Mammary epithelial cell (primary cell): ENCODE measurements at regions of chr9 and their contacts with region 1.

Region 1: DNA sequence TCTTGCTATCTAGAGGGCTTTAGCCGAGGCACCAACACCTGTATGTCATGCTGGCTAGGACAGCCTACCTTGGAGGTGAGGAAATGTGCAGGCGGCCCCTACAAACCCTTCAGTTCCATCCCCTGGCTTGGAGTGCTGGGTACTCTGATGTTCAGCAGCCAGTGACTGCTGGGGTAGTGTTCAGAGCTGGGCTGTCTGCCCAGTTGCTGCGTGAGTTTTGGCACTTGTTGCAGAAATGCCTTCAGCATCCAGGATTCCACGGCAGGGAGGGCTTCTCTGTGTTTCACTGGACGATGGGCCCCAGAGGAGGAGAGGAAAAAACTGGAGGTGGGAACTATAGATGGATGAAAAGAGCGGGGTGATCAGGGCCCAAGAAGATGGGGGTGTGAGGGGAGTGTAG is 10.4 kb downstream of the SWI5 start:
- DNase-seq: no peak
- H3K4me3 ChIP-seq: no peak overlapping the region
- H3K27ac ChIP-seq: no peak overlapping the region
- H3K4me1 ChIP-seq: no peaks in the 10 kb centered on the region
- H3K27me3 ChIP-seq: no peaks in the 10 kb centered on the region
- CTCF ChIP-seq: no peak

Region 2: GRCh38 chr9:127754099-127755050 is 532.1 kb before region 1 on chr9:
- CTCF ChIA-PET with region 1: no interaction called
- dilution Hi-C with region 1: no loop called
- in situ Hi-C with region 1: no loop called
- intact Hi-C with region 1: no loop called
- DNase-seq: no peak
- H3K4me3 ChIP-seq: no peak overlapping the region
- H3K27ac ChIP-seq: no peak overlapping the region
- H3K4me1 ChIP-seq: no peaks in the 10 kb centered on the region
- H3K27me3 ChIP-seq: peaks cover 20% of the 10 kb centered on the region
- CTCF ChIP-seq: no peak

Region 3: GRCh38 chr9:128127990-128128835 is 158.2 kb before region 1 on chr9:
- CTCF ChIA-PET with region 1: no interaction called
- dilution Hi-C with region 1: no loop called
- in situ Hi-C with region 1: no loop called
- intact Hi-C with region 1: no loop called
- DNase-seq: peak; percentile 91
- H3K4me3 ChIP-seq: peak overlapping the region; percentile 64 to 100 (median 91)
- H3K27ac ChIP-seq: peak overlapping the region; percentile 90
- H3K4me1 ChIP-seq: peaks cover 15% of the 10 kb centered on the region
- H3K27me3 ChIP-seq: no peaks in the 10 kb centered on the region
- CTCF ChIP-seq: no peak

Region 4: DNA sequence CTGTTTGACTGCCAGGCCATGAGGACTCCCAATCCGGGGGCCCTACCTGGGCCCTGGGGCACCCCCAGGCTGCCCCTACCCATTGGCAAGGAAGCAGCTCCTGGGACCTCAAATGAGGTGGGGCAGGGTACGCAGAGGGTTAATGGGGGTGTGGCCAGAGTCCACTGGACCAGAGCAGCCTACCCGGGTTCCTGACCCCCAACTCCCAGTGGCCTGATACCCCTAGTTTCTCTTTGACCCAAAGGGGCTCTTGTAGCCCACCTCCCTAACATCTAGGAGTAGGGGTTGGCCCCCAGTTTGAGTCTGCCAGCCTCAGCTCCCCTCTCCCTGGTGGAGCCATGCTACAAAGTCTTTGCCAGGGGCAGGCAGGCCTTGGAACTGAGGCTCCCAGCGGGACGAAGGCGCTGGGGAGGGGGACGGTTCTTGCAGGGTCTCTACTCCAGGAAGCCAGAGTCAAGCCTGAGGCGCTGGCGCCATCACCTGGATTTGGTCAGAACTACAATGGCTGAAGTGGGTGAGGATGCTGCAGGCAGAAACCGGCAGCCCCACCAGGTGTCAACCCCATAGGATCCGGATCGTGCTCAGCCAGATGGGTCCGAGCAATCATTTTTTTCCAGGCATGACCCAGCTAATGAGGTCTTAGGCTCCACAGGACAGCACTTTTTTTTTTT is 125.8 kb after region 1 on chr9:
- CTCF ChIA-PET with region 1: no interaction called
- dilution Hi-C with region 1: no loop called
- in situ Hi-C with region 1: no loop called
- intact Hi-C with region 1: no loop called
- DNase-seq: no peak
- H3K4me3 ChIP-seq: no peak overlapping the region
- H3K27ac ChIP-seq: no peak overlapping the region
- H3K4me1 ChIP-seq: peaks cover 6% of the 10 kb centered on the region
- H3K27me3 ChIP-seq: no peaks in the 10 kb centered on the region
- CTCF ChIP-seq: peak; percentile 47 to 68

Region 5: GRCh38 chr9:128628471-128629048 is 342.1 kb after region 1 on chr9:
- CTCF ChIA-PET with region 1: no interaction called
- dilution Hi-C with region 1: loop called (anchors 5 kb)
- in situ Hi-C with region 1: no loop called
- intact Hi-C with region 1: no loop called
- DNase-seq: no peak
- H3K4me3 ChIP-seq: no peak overlapping the region
- H3K27ac ChIP-seq: no peak overlapping the region
- H3K4me1 ChIP-seq: no peaks in the 10 kb centered on the region
- H3K27me3 ChIP-seq: no peaks in the 10 kb centered on the region
- CTCF ChIP-seq: no peak